Gastrocnemius medialis (tissue), 4 donors: ENCODE measurements at regions of chr11 and their contacts with region 1.

Region 1: DNA sequence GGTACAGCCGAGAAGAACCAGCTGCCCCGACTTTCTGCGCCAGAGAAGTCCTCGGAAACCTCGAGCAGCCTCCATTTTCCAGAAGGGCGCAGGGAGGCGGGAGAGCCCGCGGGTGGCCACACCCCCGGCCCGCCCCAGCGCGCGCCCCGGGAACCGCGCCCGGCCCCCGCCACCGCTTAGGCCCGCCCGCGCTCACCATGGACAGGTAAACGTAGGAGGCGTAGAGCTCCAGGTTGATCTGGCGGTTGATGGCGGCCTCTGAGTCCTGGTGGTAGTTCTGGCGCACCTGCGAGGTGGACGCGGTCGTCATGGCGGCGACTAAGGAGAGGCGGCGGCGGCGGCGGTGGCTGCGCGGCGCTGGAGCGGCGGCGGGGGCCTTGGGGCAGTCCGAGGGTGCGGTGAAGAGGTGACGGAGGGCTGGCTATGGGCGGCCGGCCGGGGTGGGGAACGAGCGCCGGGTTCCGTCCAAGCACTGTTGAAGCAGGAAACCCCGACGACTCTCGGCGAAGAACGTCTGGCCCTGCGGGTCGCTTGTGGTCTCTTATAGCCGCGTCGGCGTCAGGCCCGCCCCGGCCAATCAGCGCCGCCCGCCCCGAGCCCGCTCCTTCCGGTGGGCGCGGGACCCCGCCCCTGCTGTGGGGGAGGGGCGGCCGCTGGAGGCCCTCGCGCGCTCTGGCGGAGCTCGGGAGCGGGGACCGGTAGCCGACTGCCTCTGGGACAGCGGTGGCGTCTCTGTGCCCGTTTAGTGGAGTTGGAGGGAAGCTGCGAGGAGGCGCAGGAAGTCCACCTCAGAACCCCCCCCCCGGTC is at the start of gene FTH1:
- DNase-seq: peak; percentile 89 to 90
- ATAC-seq: peak; percentile 52 to 63
- H3K4me3 ChIP-seq: peak within 1 kb of the TSS; percentile 83 to 94 (median 91)
- H3K27ac ChIP-seq: peak within 1 kb of the TSS; percentile 93 to 100 (median 99)
- H3K4me1 ChIP-seq: peaks cover 55 to 63% of the 10 kb centered on the region in 2 donors
- H3K27me3 ChIP-seq: no peaks in the 10 kb centered on the region
- CTCF ChIP-seq: no peak
- POLR2A ChIP-seq: peak; percentile 100
- total RNA-seq, gene FTH1: 1,340 to 3,366 (median 1,705) TPM

Region 2: GRCh38 chr11:61695917-61696316 is 271.4 kb before region 1 on chr11:
- in situ Hi-C with region 1: no loop called
- intact Hi-C with region 1: loop called (anchors 10 kb)
- DNase-seq: peak; percentile 75 to 85
- ATAC-seq: peak; percentile 51 to 58
- H3K4me3 ChIP-seq: peak overlapping the region; percentile 20 to 50 (median 38)
- H3K27ac ChIP-seq: peak overlapping the region; percentile 84 to 97 (median 90)
- H3K4me1 ChIP-seq: peaks cover 73 to 80% of the 10 kb centered on the region in 2 donors
- H3K27me3 ChIP-seq: no peaks in the 10 kb centered on the region
- CTCF ChIP-seq: no peak
- POLR2A ChIP-seq: peak in 1 of 2 donors; percentile 27

Region 3: GRCh38 chr11:61816736-61817455 is 150.4 kb before region 1 on chr11 and contains the start of gene FADS1:
- in situ Hi-C with region 1: no loop called
- intact Hi-C with region 1: loop called (anchors 5 kb)
- DNase-seq: peak; percentile 57 to 79
- ATAC-seq: peak; percentile 17 to 25
- H3K4me3 ChIP-seq: peak within 1 kb of the TSS; percentile 64 to 88 (median 80)
- H3K27ac ChIP-seq: peak within 1 kb of the TSS; percentile 87 to 92 (median 90)
- H3K4me1 ChIP-seq: peaks cover 11 to 17% of the 10 kb centered on the region in 2 donors
- H3K27me3 ChIP-seq: no peaks in the 10 kb centered on the region
- CTCF ChIP-seq: peak in 3 of 5 experiments; percentile 33 to 50 (median 48)
- POLR2A ChIP-seq: peak; percentile 40 to 62
- total RNA-seq, gene FADS1: 25.4 to 209 (median 62.5) TPM

Region 4: GRCh38 chr11:61874458-61874809 is 92.9 kb before region 1 on chr11:
- in situ Hi-C with region 1: no loop called
- intact Hi-C with region 1: no loop called
- DNase-seq: peak in 1 of 2 donors; percentile 43
- ATAC-seq: no peak
- H3K4me3 ChIP-seq: no peak overlapping the region
- H3K27ac ChIP-seq: no peak overlapping the region
- H3K4me1 ChIP-seq: peaks cover 0 to 5% of the 10 kb centered on the region in 2 donors
- H3K27me3 ChIP-seq: no peaks in the 10 kb centered on the region
- CTCF ChIP-seq: no peak
- POLR2A ChIP-seq: no peak

Region 5: DNA sequence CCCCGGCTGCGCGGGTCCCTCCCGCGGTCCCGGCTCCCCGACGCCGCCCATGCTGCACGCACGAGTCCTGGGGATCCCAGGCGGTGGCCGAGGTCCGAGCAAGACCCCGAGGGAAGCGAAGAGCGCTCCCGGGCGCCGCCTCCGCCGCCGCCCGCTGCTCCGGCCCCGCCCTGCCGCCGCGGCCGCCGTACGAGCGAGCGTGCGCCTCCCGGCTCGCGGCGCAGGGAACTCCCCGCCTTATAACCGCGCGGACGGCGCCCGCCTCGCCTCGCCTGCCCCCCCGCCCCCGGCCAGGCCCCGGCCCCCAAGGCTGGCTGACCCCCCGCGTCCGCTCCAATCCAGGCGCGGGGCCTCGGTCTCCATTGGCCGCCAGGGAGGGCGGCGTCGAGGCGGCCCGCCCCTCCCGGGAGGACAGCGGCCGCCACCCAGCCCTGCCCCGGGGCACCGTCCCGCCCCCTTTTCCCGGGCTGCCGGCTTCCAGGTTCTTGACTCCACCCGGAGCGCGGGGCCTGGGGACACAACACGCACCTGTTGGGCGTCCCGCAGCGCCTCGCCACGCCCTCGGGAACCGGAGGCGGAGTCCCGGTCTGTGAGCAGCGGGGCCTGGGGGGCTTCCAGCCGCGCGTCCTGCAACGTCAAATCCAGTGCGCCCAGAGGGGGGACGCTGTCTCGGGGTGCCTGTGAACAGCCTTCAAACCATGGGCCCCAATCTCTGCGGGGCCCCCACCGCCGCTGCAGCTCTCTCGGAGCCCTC is 75.8 kb before region 1 on chr11 and contains the start of gene FADS3:
- in situ Hi-C with region 1: no loop called
- intact Hi-C with region 1: loop called (anchors 1 kb)
- DNase-seq: peak; percentile 84 to 92
- ATAC-seq: peak; percentile 53 to 58
- H3K4me3 ChIP-seq: peak within 1 kb of the TSS; percentile 73 to 98 (median 90)
- H3K27ac ChIP-seq: peak within 1 kb of the TSS; percentile 82 to 96 (median 92)
- H3K4me1 ChIP-seq: peaks cover 32 to 34% of the 10 kb centered on the region in 2 donors
- H3K27me3 ChIP-seq: no peaks in the 10 kb centered on the region
- CTCF ChIP-seq: peak in 4 of 5 experiments; percentile 4 to 30 (median 15)
- POLR2A ChIP-seq: peak; percentile 92 to 98
- total RNA-seq, gene FADS3: 40.7 to 196 (median 89.0) TPM

Region 6: DNA sequence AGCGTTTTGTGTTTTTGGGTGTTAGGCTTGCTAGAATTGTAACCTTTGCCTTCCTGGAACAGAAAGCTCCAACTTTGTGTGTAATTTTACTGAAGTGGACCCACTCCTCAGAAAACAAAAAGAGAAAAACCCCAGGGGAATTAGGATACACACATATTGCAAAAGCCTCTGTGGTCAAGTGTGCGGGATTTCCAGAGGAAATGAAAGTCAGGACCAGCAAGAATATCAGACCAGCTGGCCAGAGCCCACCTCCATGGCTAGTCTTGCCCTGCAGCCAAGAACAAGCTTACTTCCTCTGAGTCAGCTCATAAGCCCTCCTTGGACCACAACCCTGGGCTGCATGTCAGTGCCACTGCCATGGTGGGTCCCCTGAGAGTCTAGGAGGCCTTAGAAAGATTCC is 37.2 kb after region 1 on chr11:
- in situ Hi-C with region 1: no loop called
- intact Hi-C with region 1: no loop called
- DNase-seq: peak in 1 of 2 donors; percentile 39
- ATAC-seq: peak; percentile 46 to 70
- H3K4me3 ChIP-seq: no peak overlapping the region
- H3K27ac ChIP-seq: no peak overlapping the region
- H3K4me1 ChIP-seq: no peaks in the 10 kb centered on the region
- H3K27me3 ChIP-seq: peaks cover 0 to 5% (median 0%) of the 10 kb centered on the region in 3 donors
- CTCF ChIP-seq: no peak
- POLR2A ChIP-seq: no peak

Region 7: DNA sequence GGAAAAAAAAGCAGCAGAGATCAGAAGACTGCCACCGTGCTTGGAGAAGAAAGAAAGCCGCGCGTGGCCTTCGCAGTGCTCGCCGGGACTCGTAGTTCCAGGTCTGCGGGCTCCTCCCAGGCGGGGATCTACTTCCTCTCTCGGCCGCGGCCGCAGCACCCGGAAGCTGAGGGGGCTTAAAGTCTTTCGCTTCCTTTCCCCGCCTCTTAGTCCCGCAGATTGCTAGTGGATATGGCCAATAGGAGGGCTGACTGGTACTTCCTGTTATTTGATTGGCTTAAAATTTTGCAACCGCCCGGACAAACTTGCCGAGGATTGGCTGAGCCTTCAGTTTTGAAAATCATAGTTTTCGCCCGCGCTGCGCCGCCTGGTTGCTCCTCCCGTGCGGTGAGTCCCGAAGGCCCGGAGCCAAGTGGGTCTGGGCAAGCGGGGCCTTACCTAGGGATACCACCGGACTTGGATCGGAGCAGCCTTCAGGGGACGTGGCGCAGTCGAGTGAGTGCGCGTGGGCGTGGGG is 156.4 kb after region 1 on chr11 and contains the start of gene INCENP:
- in situ Hi-C with region 1: no loop called
- intact Hi-C with region 1: loop called (anchors 5 kb)
- DNase-seq: peak; percentile 96 to 97
- ATAC-seq: peak; percentile 100
- H3K4me3 ChIP-seq: peak within 1 kb of the TSS; percentile 81 to 85 (median 84)
- H3K27ac ChIP-seq: peak within 1 kb of the TSS; percentile 74 to 84 (median 82)
- H3K4me1 ChIP-seq: peaks cover 10 to 13% of the 10 kb centered on the region in 2 donors
- H3K27me3 ChIP-seq: no peaks in the 10 kb centered on the region
- CTCF ChIP-seq: peak in 1 of 5 experiments; percentile 21
- POLR2A ChIP-seq: peak in 1 of 2 donors; percentile 28
- total RNA-seq, gene INCENP: 6.3 to 18.7 (median 13.7) TPM